Activated CD8-positive, alpha-beta T cell treated with anti-CD3 and anti-CD28 coated beads, Interleukin-2, amount 10 ng/mL, durations not matched to agents 7 days and 5 days (primary cell): ENCODE measurements at regions of chr11 and their contacts with region 1.

Region 1: GRCh38 chr11:102614485-102614884 is 10.6 kb downstream of the MMP20 start:
- DNase-seq: no peak
- ATAC-seq: no peak
- H3K4me3 Mint-ChIP-seq: no peak overlapping the region
- H3K27ac Mint-ChIP-seq: no peak overlapping the region
- H3K4me1 Mint-ChIP-seq: peaks cover 9% of the 10 kb centered on the region
- H3K27me3 Mint-ChIP-seq: no peaks in the 10 kb centered on the region

Region 2: GRCh38 chr11:102287964-102288724 is 326.3 kb before region 1 on chr11:
- CTCF ChIA-PET with region 1: interaction called, 41 read pairs
- POLR2A ChIA-PET with region 1: no interaction called
- DNase-seq: peak; percentile 58
- ATAC-seq: peak; percentile 92
- H3K4me3 Mint-ChIP-seq: peak overlapping the region; percentile 31
- H3K27ac Mint-ChIP-seq: no peak overlapping the region
- H3K4me1 Mint-ChIP-seq: peaks cover 22% of the 10 kb centered on the region
- H3K27me3 Mint-ChIP-seq: no peaks in the 10 kb centered on the region

Region 3: DNA sequence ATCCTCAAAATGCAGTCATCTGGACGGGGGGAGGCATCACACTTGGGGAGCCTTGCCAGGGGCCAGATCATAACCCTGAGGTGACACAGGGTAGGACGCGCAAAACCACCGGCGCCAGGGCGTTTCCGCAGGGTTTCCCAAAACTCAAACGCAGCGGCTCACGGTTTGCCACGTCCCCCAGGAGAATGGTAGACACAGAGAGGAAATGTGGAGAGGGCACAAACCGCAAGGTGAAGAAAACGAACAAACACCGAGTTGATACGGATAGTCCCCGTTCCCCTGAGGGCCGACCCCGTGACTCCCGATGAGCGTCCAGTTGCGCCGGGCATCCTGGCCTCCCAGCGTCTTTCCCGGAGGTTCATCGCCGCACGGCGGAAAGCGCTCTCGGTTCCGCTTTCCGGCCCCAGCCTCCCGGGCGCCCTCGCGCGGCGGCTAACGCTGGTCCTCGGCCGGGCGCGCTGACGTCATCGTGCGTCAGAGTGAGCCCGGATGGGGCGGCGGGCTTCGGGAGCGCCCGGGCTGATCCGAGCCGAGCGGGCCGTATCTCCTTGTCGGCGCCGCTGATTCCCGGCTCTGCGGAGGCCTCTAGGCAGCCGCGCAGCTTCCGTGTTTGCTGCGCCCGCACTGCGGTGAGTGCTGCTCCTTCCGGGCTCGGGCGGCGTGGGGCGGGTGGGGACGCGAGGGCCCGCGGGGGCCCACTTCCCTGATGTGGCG is 267.6 kb before region 1 on chr11 and contains the start of gene BIRC2:
- CTCF ChIA-PET with region 1: interaction called, 148 read pairs
- POLR2A ChIA-PET with region 1: no interaction called
- DNase-seq: peak; percentile 95
- ATAC-seq: peak; percentile 95
- H3K4me3 Mint-ChIP-seq: peak within 1 kb of the TSS; percentile 97
- H3K27ac Mint-ChIP-seq: peak within 1 kb of the TSS; percentile 98
- H3K4me1 Mint-ChIP-seq: peaks cover 35% of the 10 kb centered on the region
- H3K27me3 Mint-ChIP-seq: no peaks in the 10 kb centered on the region
- total RNA-seq, gene BIRC2: 28.3 to 30.4 TPM

Region 4: DNA sequence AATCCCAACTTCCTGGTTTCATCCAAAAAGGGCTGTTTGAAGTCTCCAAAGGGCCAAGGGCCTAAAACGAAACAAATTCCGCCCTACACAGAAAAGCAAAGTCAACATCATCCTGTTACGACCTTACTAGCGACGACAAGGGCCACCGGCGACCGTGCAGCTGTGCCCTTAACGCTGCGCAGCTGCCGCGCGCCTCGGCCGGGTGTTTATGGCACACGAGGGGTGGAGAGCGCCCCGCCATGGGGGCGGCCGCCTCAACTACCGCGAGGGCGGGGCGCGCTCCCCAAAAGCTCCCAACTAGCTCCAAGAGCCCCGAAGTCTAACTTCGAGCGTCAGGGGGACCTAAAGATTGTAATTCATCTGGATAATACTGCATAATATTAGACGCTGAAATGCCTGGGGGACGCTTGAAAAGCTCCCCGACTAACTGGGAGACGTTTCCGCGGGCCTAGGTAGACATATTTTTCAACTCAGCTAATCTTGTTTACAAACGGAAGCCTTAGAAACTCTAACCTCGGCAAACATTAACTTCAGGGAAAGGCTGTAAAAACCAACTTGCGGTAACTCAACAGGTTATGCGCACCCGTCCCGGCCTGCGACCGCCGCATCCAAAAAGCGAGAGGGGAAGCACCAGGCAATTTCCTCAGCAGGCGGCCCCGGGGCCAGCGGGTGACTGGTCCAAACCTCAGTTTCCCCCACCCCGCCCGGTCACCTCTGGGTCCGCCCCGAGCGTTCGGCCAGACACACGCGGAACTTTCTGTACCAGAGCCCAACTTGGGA is 162.6 kb before region 1 on chr11:
- CTCF ChIA-PET with region 1: interaction called, 20 read pairs
- POLR2A ChIA-PET with region 1: no interaction called
- DNase-seq: peak; percentile 87
- ATAC-seq: peak; percentile 61
- H3K4me3 Mint-ChIP-seq: peak overlapping the region; percentile 97
- H3K27ac Mint-ChIP-seq: peak overlapping the region; percentile 92
- H3K4me1 Mint-ChIP-seq: peaks cover 77% of the 10 kb centered on the region
- H3K27me3 Mint-ChIP-seq: no peaks in the 10 kb centered on the region

Region 5: GRCh38 chr11:102522312-102523188 is 91.9 kb before region 1 on chr11:
- CTCF ChIA-PET with region 1: interaction called, 38 read pairs
- POLR2A ChIA-PET with region 1: no interaction called
- DNase-seq: no peak
- ATAC-seq: no peak
- H3K4me3 Mint-ChIP-seq: no peak overlapping the region
- H3K27ac Mint-ChIP-seq: no peak overlapping the region
- H3K4me1 Mint-ChIP-seq: peaks cover 8% of the 10 kb centered on the region
- H3K27me3 Mint-ChIP-seq: peaks cover 26% of the 10 kb centered on the region

Region 6: GRCh38 chr11:102599642-102600261 is 14.7 kb before region 1 on chr11:
- CTCF ChIA-PET with region 1: interaction called, 46 read pairs
- POLR2A ChIA-PET with region 1: no interaction called
- DNase-seq: no peak
- ATAC-seq: peak; percentile 57
- H3K4me3 Mint-ChIP-seq: no peak overlapping the region
- H3K27ac Mint-ChIP-seq: no peak overlapping the region
- H3K4me1 Mint-ChIP-seq: peaks cover 15% of the 10 kb centered on the region
- H3K27me3 Mint-ChIP-seq: peaks cover 2% of the 10 kb centered on the region

Region 7: GRCh38 chr11:102639656-102640055 is 25.2 kb after region 1 on chr11:
- CTCF ChIA-PET with region 1: no interaction called
- POLR2A ChIA-PET with region 1: no interaction called
- DNase-seq: no peak
- ATAC-seq: no peak
- H3K4me3 Mint-ChIP-seq: no peak overlapping the region
- H3K27ac Mint-ChIP-seq: no peak overlapping the region
- H3K4me1 Mint-ChIP-seq: no peaks in the 10 kb centered on the region
- H3K27me3 Mint-ChIP-seq: peaks cover 6% of the 10 kb centered on the region